ENCODE measurements at regions of chrX and their contacts with region 1.

Region 1: DNA sequence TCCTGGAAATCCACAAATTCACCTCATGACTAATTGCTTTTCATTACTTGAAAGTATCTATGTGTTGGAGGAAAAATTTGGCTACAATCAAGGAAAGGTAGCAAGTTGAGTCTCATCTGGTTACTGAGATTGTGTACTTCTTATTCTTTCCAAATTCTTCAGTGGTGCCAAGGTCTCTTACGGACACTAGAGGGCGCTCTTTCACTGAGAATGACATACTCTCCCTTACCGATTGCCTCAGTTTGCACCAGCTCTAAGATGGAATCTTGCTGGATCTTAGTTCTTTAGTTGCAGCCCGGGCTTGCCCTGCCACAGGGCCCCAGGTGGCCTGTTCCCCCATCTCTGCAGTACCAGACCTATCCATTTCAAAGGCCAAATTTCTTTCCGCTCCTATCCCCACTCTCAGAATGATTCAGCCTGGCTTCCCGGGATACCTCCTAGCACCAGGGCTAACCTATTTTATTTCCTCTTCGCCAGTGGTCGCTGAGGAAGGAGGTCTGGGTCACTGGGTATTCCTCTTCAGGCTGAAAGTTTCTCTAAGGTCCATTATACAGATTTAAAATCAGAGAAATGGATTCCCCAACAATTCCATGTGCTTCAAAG is 24.6 kb upstream of the GPR50 start:
- DNase-seq: peak; percentile 35
- CTCF ChIP-seq: peak; percentile 80

Region 2: GRCh38 chrX:151488677-151489076 is 336.9 kb after region 1 on chrX:
- in situ Hi-C with region 1: loop called (anchors 25 kb)
- DNase-seq: peak; percentile 23
- CTCF ChIP-seq: peak; percentile 35

Region 3: DNA sequence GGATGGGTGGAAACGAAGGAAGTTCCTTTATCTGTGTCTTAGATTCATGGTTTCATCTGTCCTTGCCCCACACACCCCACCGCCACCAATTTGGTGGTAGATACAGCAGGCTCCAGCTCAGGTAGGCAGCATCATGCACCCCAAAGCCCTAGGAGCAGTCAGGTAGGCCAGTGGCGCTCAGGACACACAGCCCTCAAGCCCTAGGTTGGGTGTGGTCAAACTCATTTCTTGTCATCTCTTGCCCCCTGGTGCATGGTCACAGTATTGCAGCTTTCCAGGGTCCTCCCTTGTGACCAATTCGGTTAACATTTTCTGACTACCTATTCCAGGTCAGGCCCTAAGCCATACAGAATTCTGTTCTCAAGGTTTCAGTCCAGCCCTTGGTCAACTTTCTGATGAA is 529.0 kb after region 1 on chrX:
- in situ Hi-C with region 1: loop called (anchors 5 kb)
- DNase-seq: peak; percentile 49
- CTCF ChIP-seq: peak; percentile 73

Measured in GM13976 (cell line).